ENCODE measurements at regions of chr18 and their contacts with region 1.

Region 1: DNA sequence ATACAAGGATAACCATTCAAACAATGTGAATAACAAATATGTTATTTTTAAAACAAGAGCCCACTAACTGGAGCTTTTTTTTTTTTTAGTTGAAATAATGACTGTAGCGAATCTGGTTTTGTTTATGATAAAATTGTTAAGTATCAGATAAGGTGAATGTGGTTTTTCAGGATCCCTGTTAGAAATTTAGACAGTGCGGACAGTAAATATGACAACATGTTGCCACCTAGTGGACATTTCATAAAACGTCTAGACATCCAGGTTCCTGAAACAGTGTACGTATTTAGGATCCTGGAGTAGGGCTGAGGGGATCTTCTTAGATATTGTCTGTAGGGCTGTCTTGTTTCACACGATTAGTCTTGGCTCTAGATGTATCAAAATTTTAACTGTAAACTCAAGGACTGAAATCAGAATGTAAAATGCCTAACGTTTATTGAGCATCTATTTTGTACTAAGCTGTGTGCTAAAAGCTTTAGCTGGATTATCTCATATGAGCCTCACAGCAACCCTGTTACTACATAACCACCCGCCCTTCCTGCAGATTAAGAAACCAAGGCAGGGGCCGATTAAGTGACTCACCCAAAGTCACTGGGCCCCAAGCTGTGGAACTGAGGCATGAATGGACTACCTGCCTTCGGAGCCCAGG is 23.9 kb upstream of the CCDC68 start:
- DNase-seq: no peak
- ATAC-seq: peak; percentile 86
- H3K4me3 ChIP-seq: no peak overlapping the region
- H3K27ac ChIP-seq: no peak overlapping the region
- H3K4me1 ChIP-seq: no peaks in the 10 kb centered on the region
- H3K27me3 ChIP-seq: no peaks in the 10 kb centered on the region
- CTCF ChIP-seq: peak; percentile 54 to 62 (median 54); a peak in 5 of 6 replicates
- EP300 ChIP-seq: no peak
- POLR2A ChIP-seq: no peak
- RAD21 ChIP-seq: peak; percentile 73

Region 2: DNA sequence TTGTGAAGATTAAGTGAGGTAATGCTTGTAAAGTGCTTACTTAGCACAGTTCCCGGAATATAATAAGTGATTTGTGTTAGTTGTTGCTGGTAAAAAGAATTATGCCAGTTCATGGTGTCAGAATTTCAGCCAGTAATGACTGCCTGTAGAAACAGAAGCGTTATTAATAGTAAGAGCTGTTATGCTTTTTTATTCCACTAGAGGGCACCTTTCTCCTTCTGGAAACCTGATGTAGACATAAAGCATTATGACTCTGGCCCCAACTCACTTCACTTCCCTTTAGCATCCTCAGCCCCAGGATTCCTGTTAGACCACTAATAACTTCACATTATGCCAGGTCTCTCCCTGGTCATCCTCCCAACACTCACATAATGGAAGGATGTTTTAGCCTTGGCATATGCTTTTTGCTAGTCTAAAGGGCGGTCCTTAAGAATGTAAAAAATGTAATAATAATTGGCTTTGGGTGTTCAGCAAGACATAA is 590.6 kb before region 1 on chr18:
- CTCF ChIA-PET with region 1: no interaction called
- POLR2A ChIA-PET with region 1: no interaction called
- RAD21 ChIA-PET with region 1: interaction called, 3 read pairs
- SMC1A ChIA-PET with region 1: no interaction called
- in situ Hi-C with region 1: no loop called
- intact Hi-C with region 1: loop called (anchors 5 kb)
- DNase-seq: no peak
- ATAC-seq: peak; percentile 76
- H3K4me3 ChIP-seq: no peak overlapping the region
- H3K27ac ChIP-seq: no peak overlapping the region
- H3K4me1 ChIP-seq: peaks cover 13% of the 10 kb centered on the region
- H3K27me3 ChIP-seq: no peaks in the 10 kb centered on the region
- CTCF ChIP-seq: peak; percentile 54 to 76 (median 76)
- EP300 ChIP-seq: no peak
- POLR2A ChIP-seq: no peak
- RAD21 ChIP-seq: peak; percentile 68

Region 3: GRCh38 chr18:54444319-54444914 is 538.7 kb before region 1 on chr18:
- CTCF ChIA-PET with region 1: interaction called, 8 read pairs
- POLR2A ChIA-PET with region 1: no interaction called
- RAD21 ChIA-PET with region 1: no interaction called
- SMC1A ChIA-PET with region 1: interaction called, 6 read pairs
- in situ Hi-C with region 1: loop called (anchors 5 kb)
- intact Hi-C with region 1: loop called (anchors 1 kb)
- DNase-seq: no peak
- ATAC-seq: peak; percentile 86
- H3K4me3 ChIP-seq: no peak overlapping the region
- H3K27ac ChIP-seq: no peak overlapping the region
- H3K4me1 ChIP-seq: no peaks in the 10 kb centered on the region
- H3K27me3 ChIP-seq: peaks cover 0 to 3% of the 10 kb centered on the region in 2 experiments; a peak in 2 of 4 replicates
- CTCF ChIP-seq: peak; percentile 67 to 87 (median 76)
- EP300 ChIP-seq: no peak
- POLR2A ChIP-seq: no peak
- RAD21 ChIP-seq: peak; percentile 91

Region 4: GRCh38 chr18:54558609-54559585 is 424.3 kb before region 1 on chr18:
- CTCF ChIA-PET with region 1: interaction called, 9 read pairs
- POLR2A ChIA-PET with region 1: no interaction called
- RAD21 ChIA-PET with region 1: no interaction called
- SMC1A ChIA-PET with region 1: no interaction called
- in situ Hi-C with region 1: loop called (anchors 25 kb)
- intact Hi-C with region 1: loop called (anchors 5 kb)
- DNase-seq: peak; percentile 11
- ATAC-seq: peak; percentile 60
- H3K4me3 ChIP-seq: no peak overlapping the region
- H3K27ac ChIP-seq: no peak overlapping the region
- H3K4me1 ChIP-seq: no peaks in the 10 kb centered on the region
- H3K27me3 ChIP-seq: no peaks in the 10 kb centered on the region; a peak in 1 of 4 replicates
- CTCF ChIP-seq: peak; percentile 53 to 67 (median 61); a peak in 5 of 6 replicates
- EP300 ChIP-seq: no peak
- POLR2A ChIP-seq: no peak
- RAD21 ChIP-seq: peak; percentile 51

Region 5: GRCh38 chr18:54679318-54680149 is 303.6 kb before region 1 on chr18:
- CTCF ChIA-PET with region 1: interaction called, 13 read pairs
- POLR2A ChIA-PET with region 1: no interaction called
- RAD21 ChIA-PET with region 1: interaction called, 4 read pairs
- SMC1A ChIA-PET with region 1: interaction called, 6 read pairs
- in situ Hi-C with region 1: loop called (anchors 5 kb)
- intact Hi-C with region 1: loop called (anchors 1 kb)
- DNase-seq: peak; percentile 9
- ATAC-seq: peak; percentile 69
- H3K4me3 ChIP-seq: no peak overlapping the region
- H3K27ac ChIP-seq: no peak overlapping the region
- H3K4me1 ChIP-seq: no peaks in the 10 kb centered on the region
- H3K27me3 ChIP-seq: 0 out of 4 replicates have a peak, but pooled peaks cover 0 to 3% of the 10 kb centered on the region in 2 experiments
- CTCF ChIP-seq: peak; percentile 12 to 43 (median 31); a peak in 5 of 6 replicates
- EP300 ChIP-seq: no peak
- POLR2A ChIP-seq: no peak
- RAD21 ChIP-seq: peak; percentile 72

Region 6: DNA sequence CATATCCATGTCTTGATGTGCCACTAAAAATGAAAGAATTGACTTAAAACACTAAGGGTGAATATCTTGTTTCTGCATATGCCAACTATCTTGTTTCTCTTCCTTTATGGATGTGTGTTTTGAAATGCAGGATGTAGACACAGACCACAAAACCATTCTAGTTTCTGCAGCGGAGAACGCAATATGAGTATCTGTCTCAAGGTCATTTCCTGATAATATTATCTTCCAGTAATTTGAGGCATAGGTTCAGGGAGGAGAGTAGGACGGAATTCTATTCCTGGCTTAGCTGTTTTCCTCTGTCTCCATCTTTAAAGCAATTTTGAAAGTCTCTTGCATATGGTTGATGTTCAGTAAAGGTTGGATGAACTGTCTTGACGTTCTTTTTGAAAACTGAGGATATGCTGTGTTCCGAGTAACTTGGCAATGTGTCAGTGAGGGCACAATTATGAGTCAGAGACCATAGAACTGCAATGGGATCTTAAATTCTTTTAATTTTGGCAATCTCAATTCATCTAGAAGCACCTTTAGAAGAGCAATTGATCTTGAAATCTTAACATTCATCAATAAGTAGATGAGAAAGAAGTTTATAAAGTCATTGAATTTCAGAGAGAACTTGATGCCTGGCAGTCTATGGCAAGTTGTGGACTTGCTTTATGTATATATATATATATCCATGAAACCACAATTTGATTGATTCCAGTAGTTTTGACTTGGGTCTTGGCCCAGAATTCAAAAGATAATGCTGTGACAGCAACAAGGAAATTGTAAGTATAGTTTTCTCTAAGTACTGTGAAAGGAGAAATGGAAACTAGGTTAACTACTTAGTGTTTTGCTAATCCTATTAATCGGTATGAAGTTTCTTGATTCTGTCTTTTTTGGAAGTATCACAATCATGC is 130.1 kb before region 1 on chr18:
- CTCF ChIA-PET with region 1: no interaction called
- POLR2A ChIA-PET with region 1: no interaction called
- RAD21 ChIA-PET with region 1: no interaction called
- SMC1A ChIA-PET with region 1: no interaction called
- in situ Hi-C with region 1: no loop called
- intact Hi-C with region 1: no loop called
- DNase-seq: no peak
- ATAC-seq: no peak
- H3K4me3 ChIP-seq: no peak overlapping the region
- H3K27ac ChIP-seq: no peak overlapping the region
- H3K4me1 ChIP-seq: no peaks in the 10 kb centered on the region
- H3K27me3 ChIP-seq: no peaks in the 10 kb centered on the region
- CTCF ChIP-seq: no peak
- EP300 ChIP-seq: no peak
- POLR2A ChIP-seq: no peak
- RAD21 ChIP-seq: no peak

Region 7: DNA sequence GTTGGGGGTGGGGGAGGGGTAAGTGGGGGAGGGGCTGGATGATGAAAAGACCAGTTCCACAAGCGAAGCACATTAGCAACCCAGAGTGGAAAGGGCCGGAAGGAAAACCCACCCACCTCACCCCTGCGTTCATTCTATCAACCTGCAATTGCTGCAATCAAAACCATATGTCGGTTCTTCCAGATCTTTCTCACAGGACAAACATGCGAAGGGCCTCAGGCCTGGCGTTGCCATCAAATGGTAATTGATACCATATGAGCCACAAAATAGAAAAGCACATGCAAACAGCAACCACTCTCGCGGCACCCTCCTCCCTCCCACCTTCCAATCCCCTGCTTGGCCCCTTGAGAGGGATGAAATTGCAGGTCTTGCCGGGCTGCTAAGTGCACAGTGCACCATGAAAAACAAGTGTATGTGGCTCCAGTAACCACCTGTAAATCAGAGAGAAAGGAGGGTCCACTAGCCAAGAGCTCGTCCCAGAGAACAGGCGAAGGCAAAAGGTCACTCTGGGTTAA is 317.3 kb after region 1 on chr18:
- CTCF ChIA-PET with region 1: no interaction called
- POLR2A ChIA-PET with region 1: no interaction called
- RAD21 ChIA-PET with region 1: no interaction called
- SMC1A ChIA-PET with region 1: no interaction called
- in situ Hi-C with region 1: no loop called
- intact Hi-C with region 1: no loop called
- DNase-seq: no peak
- ATAC-seq: no peak
- H3K4me3 ChIP-seq: peak overlapping the region; percentile 18; the same call in 1 of the 2 replicates
- H3K27ac ChIP-seq: no peak overlapping the region
- H3K4me1 ChIP-seq: peaks cover 27% of the 10 kb centered on the region
- H3K27me3 ChIP-seq: no peaks in the 10 kb centered on the region
- CTCF ChIP-seq: no peak
- EP300 ChIP-seq: no peak
- POLR2A ChIP-seq: no peak
- RAD21 ChIP-seq: no peak

Measured in GM12878 (cell line).